ENCODE measurements at regions of chr5 and their contacts with region 1.

Region 1: GRCh38 chr5:11719888-11720481 is 184.3 kb downstream of the CTNND2 start:
- DNase-seq: peak; percentile 48
- ATAC-seq: peak; percentile 83
- H3K4me3 ChIP-seq: no peak overlapping the region
- H3K27ac ChIP-seq: no peak overlapping the region
- H3K4me1 ChIP-seq: no peaks in the 10 kb centered on the region
- H3K27me3 ChIP-seq: no peaks in the 10 kb centered on the region
- CTCF ChIP-seq: peak; percentile 67
- EP300 ChIP-seq: no peak
- POLR2A ChIP-seq: no peak
- RAD21 ChIP-seq: no peak

Region 2: GRCh38 chr5:11273180-11273903 is 446.6 kb before region 1 on chr5:
- CTCF ChIA-PET with region 1: interaction called, 4 read pairs
- POLR2A ChIA-PET with region 1: no interaction called
- in situ Hi-C with region 1: loop called (anchors 10 kb)
- intact Hi-C with region 1: loop called (anchors 1 kb)
- DNase-seq: no peak
- ATAC-seq: no peak
- H3K4me3 ChIP-seq: no peak overlapping the region
- H3K27ac ChIP-seq: no peak overlapping the region
- H3K4me1 ChIP-seq: peaks cover 13% of the 10 kb centered on the region; the same call in 1 of the 2 replicates
- H3K27me3 ChIP-seq: no peaks in the 10 kb centered on the region
- CTCF ChIP-seq: no peak
- EP300 ChIP-seq: no peak
- POLR2A ChIP-seq: no peak
- RAD21 ChIP-seq: no peak

Region 3: DNA sequence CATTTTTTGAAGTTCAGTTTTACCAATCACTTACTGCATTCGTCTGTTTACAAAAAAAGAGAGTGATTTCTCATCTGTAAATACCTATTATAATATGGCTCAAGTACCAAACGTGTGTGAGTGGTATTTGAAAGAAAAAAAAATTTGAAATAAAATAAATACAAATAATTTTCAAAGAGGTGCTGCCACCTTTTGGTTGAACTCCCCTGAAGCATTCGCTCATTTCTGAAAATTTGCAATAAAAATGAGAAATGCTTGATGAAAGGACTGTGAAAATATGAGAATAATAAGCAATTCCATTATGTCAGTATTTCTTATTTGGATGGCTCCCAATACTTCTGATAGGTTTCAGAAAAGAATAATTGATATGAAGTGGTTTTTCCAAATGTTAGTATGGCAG is 225.6 kb before region 1 on chr5:
- CTCF ChIA-PET with region 1: no interaction called
- POLR2A ChIA-PET with region 1: no interaction called
- in situ Hi-C with region 1: no loop called
- intact Hi-C with region 1: no loop called
- DNase-seq: no peak
- ATAC-seq: no peak
- H3K4me3 ChIP-seq: no peak overlapping the region
- H3K27ac ChIP-seq: no peak overlapping the region
- H3K4me1 ChIP-seq: no peaks in the 10 kb centered on the region
- H3K27me3 ChIP-seq: no peaks in the 10 kb centered on the region
- CTCF ChIP-seq: no peak
- EP300 ChIP-seq: no peak
- POLR2A ChIP-seq: no peak
- RAD21 ChIP-seq: no peak